ENCODE measurements at regions of chr9 and their contacts with region 1.

Region 1: GRCh38 chr9:37465249-37466036 is at the start of gene ZBTB5:
- DNase-seq: peak; percentile 99
- ATAC-seq: peak; percentile 92 to 94
- H3K4me3 ChIP-seq: peak within 1 kb of the TSS; percentile 70 to 92 (median 90)
- H3K27ac ChIP-seq: peak within 1 kb of the TSS; percentile 91 to 100 (median 97)
- H3K4me1 ChIP-seq: peaks cover 26 to 27% of the 10 kb centered on the region in 2 donors
- H3K27me3 ChIP-seq: no peaks in the 10 kb centered on the region
- CTCF ChIP-seq: peak in 1 of 5 experiments; percentile 16
- POLR2A ChIP-seq: peak; percentile 84 to 94
- total RNA-seq, gene ZBTB5: 5.6 to 7.0 (median 6.7) TPM

Region 2: GRCh38 chr9:37119907-37120842 is 345.3 kb before region 1 on chr9 and contains the start of gene ZCCHC7:
- in situ Hi-C with region 1: no loop called
- intact Hi-C with region 1: loop called (anchors 10 kb)
- DNase-seq: peak; percentile 93 to 94
- ATAC-seq: peak; percentile 96 to 97
- H3K4me3 ChIP-seq: peak within 1 kb of the TSS; percentile 89 to 100 (median 96)
- H3K27ac ChIP-seq: peak within 1 kb of the TSS; percentile 91 to 98 (median 97)
- H3K4me1 ChIP-seq: peaks cover 17 to 19% of the 10 kb centered on the region in 2 donors
- H3K27me3 ChIP-seq: no peaks in the 10 kb centered on the region
- CTCF ChIP-seq: no peak
- POLR2A ChIP-seq: peak; percentile 85 to 88
- total RNA-seq, gene ZCCHC7: 4.8 to 11.2 (median 6.9) TPM

Region 3: GRCh38 chr9:37422289-37423104 is 42.9 kb before region 1 on chr9 and contains the start of gene GRHPR:
- in situ Hi-C with region 1: loop called in 1 of 4 experiments (anchors 10 kb)
- intact Hi-C with region 1: loop called (anchors 2 kb)
- DNase-seq: peak; percentile 83 to 88
- ATAC-seq: peak; percentile 93 to 94
- H3K4me3 ChIP-seq: peak within 1 kb of the TSS; percentile 80 to 96 (median 92)
- H3K27ac ChIP-seq: peak within 1 kb of the TSS; percentile 86 to 94 (median 92)
- H3K4me1 ChIP-seq: peaks cover 25 to 27% of the 10 kb centered on the region in 2 donors
- H3K27me3 ChIP-seq: no peaks in the 10 kb centered on the region
- CTCF ChIP-seq: no peak
- POLR2A ChIP-seq: peak; percentile 69 to 75
- total RNA-seq, gene GRHPR: 119 to 138 (median 128) TPM

Region 4: DNA sequence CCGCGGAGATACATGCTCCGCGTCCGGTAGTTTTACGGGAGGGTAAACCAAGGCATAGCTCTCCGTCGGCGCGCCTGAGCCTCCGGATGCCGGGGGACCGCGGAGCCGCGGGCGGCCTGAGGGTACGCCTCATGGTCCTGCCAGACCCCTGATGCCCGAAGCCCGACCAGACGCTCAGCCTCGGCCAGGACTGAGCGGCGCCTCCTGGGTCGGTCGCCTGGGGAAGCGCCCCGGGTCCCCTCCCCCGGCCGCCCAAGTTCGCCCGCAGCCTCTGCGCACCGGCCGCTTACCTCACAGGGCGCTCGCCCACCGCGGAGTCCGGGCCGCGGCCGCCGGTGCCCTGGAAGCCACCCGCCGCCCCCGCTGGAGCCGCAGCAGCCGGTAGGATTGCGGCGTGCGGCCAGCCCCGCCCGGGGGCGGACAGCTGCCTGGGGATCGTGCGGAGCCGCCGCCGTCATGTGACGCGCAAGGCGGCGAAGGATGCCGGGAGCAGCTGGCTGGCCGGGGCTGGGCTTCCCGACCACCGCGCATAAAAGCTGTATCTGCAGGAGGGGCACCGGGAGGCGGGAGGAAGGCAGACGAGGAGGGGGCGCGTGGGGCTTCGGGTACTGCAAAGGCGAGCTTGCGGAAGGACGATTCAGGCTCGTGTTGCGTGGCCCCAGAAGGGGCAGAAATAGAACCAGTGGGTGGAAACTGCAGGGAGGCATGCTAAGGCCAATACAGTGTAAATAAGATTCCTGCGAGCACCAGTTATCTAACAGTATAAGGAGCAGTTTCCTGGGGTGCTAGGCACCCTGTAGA is 110.7 kb after region 1 on chr9 and contains the start of gene FBXO10:
- in situ Hi-C with region 1: loop called in 1 of 4 experiments (anchors 10 kb)
- intact Hi-C with region 1: loop called (anchors 5 kb)
- DNase-seq: peak; percentile 53 to 72
- ATAC-seq: peak; percentile 62 to 71
- H3K4me3 ChIP-seq: peak within 1 kb of the TSS; percentile 84 to 96 (median 93)
- H3K27ac ChIP-seq: peak within 1 kb of the TSS; percentile 94 to 99 (median 98)
- H3K4me1 ChIP-seq: peaks cover 35 to 42% of the 10 kb centered on the region in 2 donors
- H3K27me3 ChIP-seq: no peaks in the 10 kb centered on the region
- CTCF ChIP-seq: peak in 1 of 5 experiments; percentile 24
- POLR2A ChIP-seq: peak; percentile 95 to 96
- total RNA-seq, gene FBXO10: 49.8 to 62.2 (median 53.5) TPM

Region 5: GRCh38 chr9:38096238-38096805 is 630.9 kb after region 1 on chr9:
- in situ Hi-C with region 1: no loop called
- intact Hi-C with region 1: loop called (anchors 5 kb)
- DNase-seq: peak; percentile 70 to 89
- ATAC-seq: peak; percentile 96 to 97
- H3K4me3 ChIP-seq: no peak overlapping the region
- H3K27ac ChIP-seq: peak overlapping the region in 1 of 4 donors; percentile 58
- H3K4me1 ChIP-seq: no peaks in the 10 kb centered on the region
- H3K27me3 ChIP-seq: no peaks in the 10 kb centered on the region
- CTCF ChIP-seq: no peak
- POLR2A ChIP-seq: no peak

Measured in gastrocnemius medialis (tissue), 4 donors.